ENCODE measurements at regions of chr12 and their contacts with region 1.

Region 1: GRCh38 chr12:109899783-109900751 is at the start of gene TCHP:
- DNase-seq: peak; percentile 35 to 91 (median 72)
- ATAC-seq: peak; percentile 90
- H3K4me3 ChIP-seq: peak within 1 kb of the TSS; percentile 79 to 86
- H3K4me3 Mint-ChIP-seq: peak within 1 kb of the TSS; percentile 95
- H3K27ac ChIP-seq: peak within 1 kb of the TSS; percentile 65 to 69
- H3K27ac Mint-ChIP-seq: peak within 1 kb of the TSS; percentile 97
- H3K4me1 ChIP-seq: peaks cover 17% of the 10 kb centered on the region
- H3K4me1 Mint-ChIP-seq: peaks cover 28% of the 10 kb centered on the region
- H3K27me3 ChIP-seq: no peaks in the 10 kb centered on the region
- H3K27me3 Mint-ChIP-seq: no peaks in the 10 kb centered on the region
- CTCF ChIP-seq: no peak
- total RNA-seq, gene TCHP: 11.4 to 15.7 TPM

Region 2: DNA sequence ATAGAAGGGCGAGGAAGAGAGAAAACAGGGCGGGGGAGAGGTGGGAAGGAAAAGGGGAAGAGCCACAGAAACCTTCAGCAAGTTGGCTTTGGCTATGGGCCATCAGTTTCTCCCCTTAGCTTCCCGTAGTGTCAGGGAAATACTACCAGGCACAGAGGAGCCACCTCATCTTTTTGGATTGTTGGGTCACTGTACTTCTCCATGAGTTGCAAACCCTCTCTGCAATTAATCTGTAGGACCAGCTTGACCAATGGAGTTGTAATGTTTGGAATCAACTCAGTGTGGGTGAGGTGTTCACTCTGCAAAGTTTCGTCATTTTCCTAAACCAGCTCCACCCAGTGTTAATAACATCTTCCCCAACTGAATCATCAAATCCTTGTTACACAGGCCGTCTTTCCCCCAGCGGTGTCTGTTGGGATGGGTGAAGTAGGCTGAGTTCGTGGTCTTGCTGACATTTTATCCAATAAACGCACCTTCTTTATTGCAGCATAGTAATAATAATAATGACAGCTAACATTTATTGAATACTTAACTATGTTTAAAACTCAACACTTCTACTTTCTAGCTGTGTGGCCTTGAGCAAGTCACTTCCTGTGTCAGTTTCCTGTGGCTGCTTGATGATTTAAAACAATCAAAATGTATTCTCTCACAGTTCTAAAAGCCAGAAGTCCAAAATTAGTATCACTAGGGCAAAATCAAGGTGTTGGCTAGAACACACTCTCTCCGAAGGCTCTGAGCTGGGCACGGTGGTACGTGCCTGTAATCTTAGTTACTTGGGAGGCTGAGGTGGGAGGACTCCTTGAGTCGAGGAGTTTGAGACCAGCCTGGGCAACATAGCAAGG is 11.7 kb before region 1 on chr12:
- CTCF ChIA-PET with region 1: interaction called, 10 read pairs
- POLR2A ChIA-PET with region 1: interaction called, 13 read pairs
- intact Hi-C with region 1: loop called in 1 of 2 experiments (anchors 1 kb)
- DNase-seq: peak in 5 of 9 experiments; percentile 7 to 74 (median 55)
- ATAC-seq: peak; percentile 58
- H3K4me3 ChIP-seq: no peak overlapping the region
- H3K4me3 Mint-ChIP-seq: peak overlapping the region; percentile 46
- H3K27ac ChIP-seq: peak overlapping the region; percentile 38 to 96
- H3K27ac Mint-ChIP-seq: peak overlapping the region; percentile 90
- H3K4me1 ChIP-seq: peaks cover 35% of the 10 kb centered on the region
- H3K4me1 Mint-ChIP-seq: peaks cover 37% of the 10 kb centered on the region
- H3K27me3 ChIP-seq: no peaks in the 10 kb centered on the region
- H3K27me3 Mint-ChIP-seq: no peaks in the 10 kb centered on the region
- CTCF ChIP-seq: no peak

Region 3: GRCh38 chr12:109910969-109911348 is 10.9 kb after region 1 on chr12:
- CTCF ChIA-PET with region 1: no interaction called
- POLR2A ChIA-PET with region 1: no interaction called
- intact Hi-C with region 1: no loop called
- DNase-seq: peak in 3 of 9 experiments; percentile 11 to 33 (median 22)
- ATAC-seq: peak; percentile 36
- H3K4me3 ChIP-seq: no peak overlapping the region
- H3K4me3 Mint-ChIP-seq: no peak overlapping the region
- H3K27ac ChIP-seq: no peak overlapping the region
- H3K27ac Mint-ChIP-seq: peak overlapping the region; percentile 41
- H3K4me1 ChIP-seq: no peaks in the 10 kb centered on the region
- H3K4me1 Mint-ChIP-seq: no peaks in the 10 kb centered on the region
- H3K27me3 ChIP-seq: no peaks in the 10 kb centered on the region
- H3K27me3 Mint-ChIP-seq: no peaks in the 10 kb centered on the region
- CTCF ChIP-seq: no peak

Region 4: DNA sequence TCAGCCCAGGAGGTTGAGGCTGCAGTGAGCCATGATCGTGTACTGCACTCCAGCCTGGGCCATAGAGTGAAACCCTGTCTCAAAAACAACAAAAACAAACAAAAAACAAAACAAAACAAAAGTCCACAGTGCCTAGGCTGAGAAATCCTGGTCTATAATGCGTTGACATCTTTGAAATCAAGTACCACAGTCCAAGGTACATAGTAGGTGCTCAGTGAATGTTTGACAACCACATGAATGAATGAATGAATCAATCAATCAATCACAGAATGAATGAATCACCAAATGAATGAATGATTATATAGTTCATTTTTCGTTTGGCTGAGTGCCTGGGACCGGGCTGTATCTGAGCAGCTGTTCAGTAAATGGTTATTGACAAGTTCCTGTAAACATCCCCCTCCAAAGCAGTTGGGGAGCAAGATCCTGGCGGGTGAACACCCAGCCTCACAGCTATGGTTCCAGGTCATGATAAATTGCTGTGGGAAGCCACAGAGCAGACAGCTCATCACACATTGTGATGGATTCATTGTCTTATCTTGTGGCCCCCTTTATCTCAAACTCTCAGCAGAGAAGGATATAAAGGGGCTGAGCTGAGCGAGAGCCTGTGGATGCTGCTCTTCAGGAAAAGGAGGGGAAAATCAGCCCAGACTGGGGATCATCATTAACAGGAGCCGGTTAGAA is 193.7 kb after region 1 on chr12:
- CTCF ChIA-PET with region 1: no interaction called
- POLR2A ChIA-PET with region 1: no interaction called
- intact Hi-C with region 1: no loop called
- DNase-seq: no peak
- ATAC-seq: no peak
- H3K4me3 ChIP-seq: no peak overlapping the region
- H3K4me3 Mint-ChIP-seq: no peak overlapping the region
- H3K27ac ChIP-seq: no peak overlapping the region
- H3K27ac Mint-ChIP-seq: no peak overlapping the region
- H3K4me1 ChIP-seq: no peaks in the 10 kb centered on the region
- H3K4me1 Mint-ChIP-seq: no peaks in the 10 kb centered on the region
- H3K27me3 ChIP-seq: peaks cover 0 to 8% of the 10 kb centered on the region in 2 experiments
- H3K27me3 Mint-ChIP-seq: peaks cover 16% of the 10 kb centered on the region
- CTCF ChIP-seq: no peak

Measured in CD8-positive, alpha-beta T cell (primary cell).